Motor neuron (in vitro differentiated cells): ENCODE measurements at regions of chr1 and their contacts with region 1.

Region 1: DNA sequence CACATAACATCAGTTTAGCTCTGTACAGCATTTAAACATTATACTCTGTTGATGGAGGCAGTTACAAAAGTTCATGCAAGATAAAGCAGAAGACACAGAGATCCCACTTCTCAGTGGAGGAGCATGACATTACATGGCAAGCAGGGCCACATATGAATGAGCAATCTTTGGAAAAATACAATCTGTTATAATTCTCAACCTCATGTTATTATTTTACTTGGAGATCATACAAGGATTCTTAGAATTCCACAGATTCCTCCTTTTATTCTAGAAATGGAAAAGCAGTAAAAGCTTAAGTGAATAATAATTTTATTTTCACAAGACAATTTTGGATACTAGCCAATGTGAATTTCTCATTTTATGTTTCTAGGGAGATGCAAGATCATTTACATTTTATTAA is 66.6 kb downstream of the IFI44 start:
- ATAC-seq: no peak
- H3K4me3 ChIP-seq: no peak overlapping the region
- H3K27ac ChIP-seq: no peak overlapping the region
- H3K4me1 ChIP-seq: peaks cover 0 to 7% of the 10 kb centered on the region in 2 donors

Region 2: DNA sequence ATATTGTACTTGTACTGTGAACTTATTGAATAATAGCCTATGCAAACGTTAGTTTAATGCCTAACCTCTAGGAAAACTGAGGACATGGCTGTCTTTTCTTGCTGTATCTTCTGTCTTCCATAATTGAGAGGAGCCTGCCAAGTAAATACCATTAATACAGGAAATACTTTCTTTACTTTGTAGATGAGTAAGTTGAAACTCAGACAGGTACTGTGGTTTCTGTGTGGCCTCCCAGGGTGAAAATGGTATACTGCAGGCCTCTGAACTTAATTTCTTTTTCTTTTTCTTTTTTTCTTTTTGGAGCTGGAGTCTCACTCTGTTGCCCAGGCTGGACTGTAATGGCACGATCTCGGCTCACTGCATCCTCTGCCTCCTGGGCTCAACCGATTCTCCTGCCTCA is 499.1 kb after region 1 on chr1:
- in situ Hi-C with region 1: loop called in 1 of 9 experiments (anchors 25 kb)
- ATAC-seq: no peak
- H3K4me3 ChIP-seq: no peak overlapping the region
- H3K27ac ChIP-seq: no peak overlapping the region
- H3K4me1 ChIP-seq: no peaks in the 10 kb centered on the region